ENCODE measurements at regions of chr10 and their contacts with region 1.

Region 1: DNA sequence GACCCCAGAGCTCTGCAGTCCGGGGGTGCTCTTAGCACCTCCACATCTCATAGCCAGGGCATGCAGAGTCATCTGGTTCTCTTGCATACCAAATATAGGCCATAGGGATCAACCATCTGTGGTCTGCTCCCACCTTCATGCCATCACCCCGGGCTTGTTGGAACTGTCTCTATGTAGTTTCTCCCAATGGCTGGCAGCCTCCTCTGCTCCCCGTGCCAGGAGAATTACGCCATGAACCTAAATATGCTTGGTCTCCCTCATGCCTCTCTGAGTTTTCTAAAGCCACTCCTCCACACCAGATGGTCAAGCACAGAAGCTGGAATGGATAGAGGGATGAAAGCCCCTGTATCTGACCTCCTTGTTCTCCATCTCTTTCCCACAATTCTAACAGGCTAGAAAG is 302.6 kb upstream of the MYO3A start:
- DNase-seq: no peak
- H3K4me3 ChIP-seq: no peak overlapping the region
- H3K27ac ChIP-seq: no peak overlapping the region
- H3K4me1 ChIP-seq: no peaks in the 10 kb centered on the region
- H3K27me3 ChIP-seq: no peaks in the 10 kb centered on the region
- CTCF ChIP-seq: no peak
- POLR2A ChIP-seq: no peak

Region 2: GRCh38 chr10:24737001-24737400 is 894.5 kb before region 1 on chr10:
- intact Hi-C with region 1: no loop called
- DNase-seq: no peak
- H3K4me3 ChIP-seq: no peak overlapping the region
- H3K27ac ChIP-seq: no peak overlapping the region
- H3K4me1 ChIP-seq: no peaks in the 10 kb centered on the region
- H3K27me3 ChIP-seq: no peaks in the 10 kb centered on the region
- CTCF ChIP-seq: no peak
- POLR2A ChIP-seq: no peak

Region 3: GRCh38 chr10:25097669-25098411 is 533.6 kb before region 1 on chr10:
- intact Hi-C with region 1: no loop called
- DNase-seq: no peak
- H3K4me3 ChIP-seq: no peak overlapping the region
- H3K27ac ChIP-seq: no peak overlapping the region
- H3K4me1 ChIP-seq: no peaks in the 10 kb centered on the region
- H3K27me3 ChIP-seq: no peaks in the 10 kb centered on the region
- CTCF ChIP-seq: no peak
- POLR2A ChIP-seq: no peak

Region 4: DNA sequence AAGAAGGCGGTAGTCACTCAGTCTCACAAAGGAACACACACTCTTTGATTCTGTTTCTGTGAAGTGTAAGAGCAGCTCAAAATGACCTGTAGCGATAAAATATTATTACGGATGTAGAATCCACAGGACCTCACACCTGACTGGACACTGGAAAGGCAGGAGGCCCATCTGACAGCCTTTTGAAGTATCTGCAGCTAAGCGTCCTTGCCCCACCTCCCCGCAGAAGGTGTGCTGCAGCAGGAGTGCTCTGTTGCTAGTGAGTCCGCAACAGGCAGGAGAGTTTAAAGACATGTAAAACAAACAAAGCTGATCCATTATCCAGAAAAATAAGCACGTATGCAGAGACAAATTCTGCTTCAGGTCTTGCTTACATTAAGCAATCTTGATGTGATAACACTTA is 101.2 kb before region 1 on chr10:
- intact Hi-C with region 1: no loop called
- DNase-seq: no peak
- H3K4me3 ChIP-seq: no peak overlapping the region
- H3K27ac ChIP-seq: no peak overlapping the region
- H3K4me1 ChIP-seq: no peaks in the 10 kb centered on the region
- H3K27me3 ChIP-seq: no peaks in the 10 kb centered on the region
- CTCF ChIP-seq: no peak
- POLR2A ChIP-seq: no peak

Region 5: GRCh38 chr10:25615926-25616325 is 15.5 kb before region 1 on chr10:
- intact Hi-C with region 1: loop called (anchors 2 kb)
- DNase-seq: no peak
- H3K4me3 ChIP-seq: no peak overlapping the region
- H3K27ac ChIP-seq: no peak overlapping the region
- H3K4me1 ChIP-seq: no peaks in the 10 kb centered on the region
- H3K27me3 ChIP-seq: no peaks in the 10 kb centered on the region
- CTCF ChIP-seq: no peak
- POLR2A ChIP-seq: no peak